HepG2 (cell line): ENCODE measurements at regions of chr22 and their contacts with region 1.

Region 1: DNA sequence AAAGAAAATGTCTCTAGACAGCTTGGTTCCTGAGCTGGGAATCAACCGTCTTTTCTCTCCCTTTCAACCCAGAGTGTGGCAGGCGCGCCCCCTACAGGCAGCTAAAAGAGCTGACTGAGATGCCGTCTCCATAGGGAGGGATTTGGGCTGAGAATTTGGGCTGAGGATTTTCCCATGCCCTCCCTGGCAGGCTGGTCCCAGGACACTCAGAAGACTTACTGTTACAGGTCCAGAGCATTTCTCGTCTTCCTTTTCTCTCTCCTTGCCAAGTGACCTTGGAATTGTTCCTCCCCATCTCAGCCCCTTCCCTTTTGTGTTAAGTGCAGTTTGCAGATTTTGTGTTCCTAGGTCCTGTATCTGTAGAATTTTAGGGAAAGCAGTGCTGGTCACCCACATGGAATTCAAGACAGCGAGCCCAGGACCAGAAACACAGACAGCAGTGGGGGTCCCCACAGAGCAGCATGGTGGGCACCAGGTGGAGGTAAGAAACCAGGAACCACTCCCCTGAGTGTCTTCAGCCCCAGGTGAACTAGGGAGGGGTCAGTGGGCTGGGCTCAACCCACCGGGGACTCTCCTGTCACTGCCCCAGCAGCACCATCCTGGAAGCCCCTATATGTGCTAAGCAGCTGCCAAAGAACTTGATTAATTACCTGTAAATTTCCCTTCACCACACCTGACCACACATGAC is 9.9 kb upstream of the IGLL5 start:
- DNase-seq: peak; percentile 46
- ATAC-seq: peak; percentile 62
- H3K4me3 ChIP-seq: no peak overlapping the region
- H3K27ac ChIP-seq: no peak overlapping the region
- H3K4me1 ChIP-seq: no peaks in the 10 kb centered on the region
- H3K27me3 ChIP-seq: peaks cover 2 to 18% of the 10 kb centered on the region in 2 experiments; a peak in 3 of 5 replicates
- CTCF ChIP-seq: peak; percentile 77
- EP300 ChIP-seq: no peak
- POLR2A ChIP-seq: no peak
- RAD21 ChIP-seq: 0 out of 2 replicates have a peak, but pooled peaks have one; percentile 21

Region 2: DNA sequence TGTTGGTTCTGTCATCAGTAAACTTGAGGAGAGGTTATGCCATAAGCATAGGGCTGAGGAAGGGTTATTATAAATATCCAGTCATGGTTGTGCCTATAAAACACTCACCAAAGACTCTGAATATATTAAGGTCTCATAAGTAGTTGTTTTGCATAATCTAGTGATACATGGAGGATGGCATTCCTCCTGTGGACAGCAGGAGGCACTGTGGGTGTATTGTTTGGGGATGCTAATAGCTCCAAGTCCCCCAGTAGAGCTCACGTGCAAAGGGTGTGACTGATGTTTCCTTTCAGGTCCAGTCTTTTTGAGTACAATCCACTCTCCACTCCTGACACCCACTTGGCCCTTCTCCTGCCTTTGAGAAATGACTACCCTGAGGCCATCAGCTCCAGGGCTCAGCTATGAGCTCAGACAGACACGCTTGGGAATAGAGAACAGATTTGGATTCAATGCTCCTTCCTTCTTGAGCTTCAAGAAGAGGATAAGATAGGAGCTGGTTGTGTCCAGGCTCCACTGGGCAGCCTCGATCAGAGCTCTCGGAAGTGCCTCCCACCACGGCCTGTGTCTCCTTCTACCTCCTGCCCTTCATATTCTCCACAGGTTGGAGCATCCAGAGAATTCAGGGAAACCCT is 75.2 kb before region 1 on chr22:
- CTCF ChIA-PET with region 1: no interaction called
- POLR2A ChIA-PET with region 1: no interaction called
- in situ Hi-C with region 1: no loop called
- intact Hi-C with region 1: no loop called
- DNase-seq: no peak
- ATAC-seq: no peak
- H3K4me3 ChIP-seq: no peak overlapping the region
- H3K27ac ChIP-seq: no peak overlapping the region
- H3K4me1 ChIP-seq: no peaks in the 10 kb centered on the region
- H3K27me3 ChIP-seq: peaks cover 0 to 21% of the 10 kb centered on the region in 2 experiments; a peak in 1 of 5 replicates
- CTCF ChIP-seq: peak; percentile 36; the same call in 1 of the 2 replicates
- EP300 ChIP-seq: no peak
- POLR2A ChIP-seq: no peak
- RAD21 ChIP-seq: no peak

Region 3: DNA sequence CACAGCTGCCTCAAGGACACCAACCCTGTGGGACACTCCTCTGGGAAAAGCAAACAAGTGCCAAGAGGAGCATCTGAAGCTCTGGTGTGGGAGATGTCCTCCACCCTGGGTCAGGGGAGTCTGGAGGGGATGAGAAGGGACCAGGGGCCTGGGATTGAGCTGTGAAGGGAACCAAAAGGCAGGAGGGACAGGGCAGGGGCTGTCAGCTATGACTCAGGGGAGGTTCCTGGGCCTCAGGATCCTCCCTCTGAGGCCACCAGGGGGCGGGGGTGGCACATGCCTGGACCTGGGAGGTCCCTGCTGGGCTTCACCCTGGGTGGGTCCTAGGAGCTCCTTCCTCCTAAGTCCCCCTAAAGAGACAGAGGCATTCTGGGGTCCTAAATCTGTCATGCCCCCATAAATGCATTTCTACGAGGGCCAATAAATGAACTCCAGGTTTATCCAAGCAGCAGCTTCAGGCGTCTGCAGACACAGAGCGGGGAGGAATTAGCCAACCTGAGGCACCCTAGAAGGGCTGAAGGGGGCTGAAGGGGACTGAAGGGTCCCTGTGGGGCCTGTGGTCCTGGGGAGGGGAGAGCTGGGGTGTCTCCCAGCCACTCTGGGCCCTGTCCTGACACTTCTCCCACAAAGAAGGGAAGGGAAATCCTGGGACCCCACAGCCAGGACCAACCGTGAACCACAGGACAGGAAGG is 21.9 kb before region 1 on chr22:
- CTCF ChIA-PET with region 1: interaction called, 13 read pairs
- POLR2A ChIA-PET with region 1: no interaction called
- in situ Hi-C with region 1: no loop called
- intact Hi-C with region 1: no loop called
- DNase-seq: peak; percentile 12
- ATAC-seq: peak; percentile 97
- H3K4me3 ChIP-seq: no peak overlapping the region
- H3K27ac ChIP-seq: no peak overlapping the region
- H3K4me1 ChIP-seq: peaks cover 18% of the 10 kb centered on the region
- H3K27me3 ChIP-seq: peaks cover 0 to 47% of the 10 kb centered on the region in 2 experiments; a peak in 2 of 5 replicates
- CTCF ChIP-seq: peak; percentile 68
- EP300 ChIP-seq: no peak
- POLR2A ChIP-seq: no peak
- RAD21 ChIP-seq: peak; percentile 36; the same call in 1 of the 2 replicates